CD14-positive monocyte (primary cell): ENCODE measurements at regions of chr15 and their contacts with region 1.

Region 1: GRCh38 chr15:69413822-69414700 is at the start of gene KIF23:
- DNase-seq: peak; percentile 90 to 99 (median 94)
- H3K4me3 ChIP-seq: peak within 1 kb of the TSS; percentile 76 to 97 (median 90)
- H3K4me3 Mint-ChIP-seq: peak within 1 kb of the TSS; percentile 92 to 96
- H3K27ac ChIP-seq: no peak within 1 kb of the TSS
- H3K27ac Mint-ChIP-seq: peak within 1 kb of the TSS in 6 of 7 donors; percentile 16 to 82 (median 73)
- H3K4me1 ChIP-seq: peaks cover 6 to 14% of the 10 kb centered on the region in 2 donors
- H3K4me1 Mint-ChIP-seq: peaks cover 12% of the 10 kb centered on the region
- H3K27me3 ChIP-seq: no peaks in the 10 kb centered on the region
- H3K27me3 Mint-ChIP-seq: peaks cover 0 to 5% (median 2%) of the 10 kb centered on the region in 3 donors
- CTCF ChIP-seq: no peak
- polyA plus RNA-seq, gene KIF23: 1.5 to 8.1 (median 1.8) TPM

Region 2: DNA sequence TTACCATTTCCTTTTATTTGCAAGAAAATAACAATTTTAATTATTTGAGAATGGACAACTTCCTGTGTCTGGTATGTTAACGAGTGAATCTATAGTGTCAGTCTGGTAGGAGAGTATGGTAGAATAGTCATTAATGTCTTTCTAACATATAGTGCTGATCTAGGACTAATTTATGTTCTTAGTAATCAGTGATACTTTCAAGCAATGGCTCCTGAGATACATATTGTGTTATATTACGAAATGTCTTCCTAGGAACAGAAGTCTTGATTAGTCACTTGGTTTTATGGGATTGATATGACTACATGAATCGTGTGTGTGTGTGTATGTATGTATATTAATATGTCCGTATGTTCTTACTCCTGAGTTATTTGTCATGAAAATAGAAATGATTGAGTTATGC is 181.9 kb before region 1 on chr15:
- intact Hi-C with region 1: no loop called
- DNase-seq: no peak
- H3K4me3 ChIP-seq: no peak overlapping the region
- H3K4me3 Mint-ChIP-seq: no peak overlapping the region
- H3K27ac ChIP-seq: no peak overlapping the region
- H3K27ac Mint-ChIP-seq: no peak overlapping the region
- H3K4me1 ChIP-seq: no peaks in the 10 kb centered on the region
- H3K4me1 Mint-ChIP-seq: no peaks in the 10 kb centered on the region
- H3K27me3 ChIP-seq: no peaks in the 10 kb centered on the region
- H3K27me3 Mint-ChIP-seq: peaks cover 0 to 2% (median 0%) of the 10 kb centered on the region in 3 donors
- CTCF ChIP-seq: no peak

Region 3: DNA sequence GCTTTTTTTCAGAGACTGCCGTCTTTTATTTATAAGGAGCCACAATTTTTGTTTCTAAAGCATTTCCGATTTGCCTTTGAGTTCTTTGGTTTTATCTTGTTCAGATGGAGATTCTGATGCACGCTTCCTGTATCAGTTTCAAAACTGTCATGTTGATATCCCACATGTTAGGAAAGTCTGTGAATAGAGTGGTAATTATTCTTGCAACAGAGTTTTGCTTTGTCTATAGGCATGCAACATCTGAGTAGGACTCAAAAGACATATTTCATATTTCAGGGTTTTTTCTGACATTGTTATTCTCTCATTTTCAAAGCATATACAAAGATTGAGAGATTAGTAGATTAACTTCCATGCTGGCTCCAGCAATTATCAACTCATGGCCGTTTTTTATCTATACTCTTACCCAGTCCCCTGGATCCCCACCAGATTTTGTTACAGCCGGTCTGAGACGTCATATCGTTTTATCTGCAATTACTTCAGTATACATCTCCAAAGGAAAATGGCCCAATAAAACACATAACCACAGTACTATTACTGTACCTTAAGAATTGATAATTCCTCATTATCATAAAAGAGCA is 93.0 kb before region 1 on chr15:
- intact Hi-C with region 1: no loop called
- DNase-seq: no peak
- H3K4me3 ChIP-seq: no peak overlapping the region
- H3K4me3 Mint-ChIP-seq: no peak overlapping the region
- H3K27ac ChIP-seq: no peak overlapping the region
- H3K27ac Mint-ChIP-seq: no peak overlapping the region
- H3K4me1 ChIP-seq: no peaks in the 10 kb centered on the region
- H3K4me1 Mint-ChIP-seq: peaks cover 27% of the 10 kb centered on the region
- H3K27me3 ChIP-seq: no peaks in the 10 kb centered on the region
- H3K27me3 Mint-ChIP-seq: peaks cover 3 to 8% (median 5%) of the 10 kb centered on the region in 3 donors
- CTCF ChIP-seq: no peak

Region 4: DNA sequence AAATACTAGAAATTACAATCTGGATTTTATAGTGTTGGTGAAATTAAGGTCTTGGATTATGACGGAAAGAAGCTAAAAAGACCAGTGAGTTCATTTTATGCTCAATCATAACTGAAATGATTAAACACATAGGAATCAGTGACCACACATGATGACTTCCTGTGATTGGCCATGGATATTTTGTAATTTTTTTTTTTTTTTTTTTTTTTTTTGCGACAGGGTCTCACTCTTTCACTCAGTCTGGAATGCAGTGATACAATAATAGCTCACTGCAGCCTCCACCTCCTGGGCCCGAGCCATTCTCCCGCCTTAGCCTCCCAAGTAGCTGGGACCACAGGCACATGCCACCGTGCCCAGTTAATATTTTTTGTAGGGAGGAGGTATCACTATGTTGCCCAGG is 67.9 kb before region 1 on chr15:
- intact Hi-C with region 1: no loop called
- DNase-seq: no peak
- H3K4me3 ChIP-seq: no peak overlapping the region
- H3K4me3 Mint-ChIP-seq: no peak overlapping the region
- H3K27ac ChIP-seq: no peak overlapping the region
- H3K27ac Mint-ChIP-seq: no peak overlapping the region
- H3K4me1 ChIP-seq: no peaks in the 10 kb centered on the region
- H3K4me1 Mint-ChIP-seq: no peaks in the 10 kb centered on the region
- H3K27me3 ChIP-seq: no peaks in the 10 kb centered on the region
- H3K27me3 Mint-ChIP-seq: peaks cover 0 to 2% (median 1%) of the 10 kb centered on the region in 3 donors
- CTCF ChIP-seq: no peak

Region 5: GRCh38 chr15:69380100-69380727 is 33.8 kb before region 1 on chr15:
- intact Hi-C with region 1: no loop called
- DNase-seq: no peak
- H3K4me3 ChIP-seq: no peak overlapping the region
- H3K4me3 Mint-ChIP-seq: no peak overlapping the region
- H3K27ac ChIP-seq: no peak overlapping the region
- H3K27ac Mint-ChIP-seq: no peak overlapping the region
- H3K4me1 ChIP-seq: no peaks in the 10 kb centered on the region
- H3K4me1 Mint-ChIP-seq: no peaks in the 10 kb centered on the region
- H3K27me3 ChIP-seq: no peaks in the 10 kb centered on the region
- H3K27me3 Mint-ChIP-seq: peaks cover 0 to 10% (median 4%) of the 10 kb centered on the region in 3 donors
- CTCF ChIP-seq: no peak

Region 6: GRCh38 chr15:69452692-69453521 is 38.8 kb after region 1 on chr15 and contains the start of gene RPLP1:
- intact Hi-C with region 1: loop called (anchors 2 kb)
- DNase-seq: peak; percentile 93 to 97 (median 94)
- H3K4me3 ChIP-seq: peak within 1 kb of the TSS; percentile 82 to 97 (median 89)
- H3K4me3 Mint-ChIP-seq: peak within 1 kb of the TSS; percentile 95 to 99
- H3K27ac ChIP-seq: peak within 1 kb of the TSS; percentile 82 to 91
- H3K27ac Mint-ChIP-seq: peak within 1 kb of the TSS; percentile 88 to 97 (median 96)
- H3K4me1 ChIP-seq: peaks cover 29 to 36% of the 10 kb centered on the region in 2 donors
- H3K4me1 Mint-ChIP-seq: peaks cover 38% of the 10 kb centered on the region
- H3K27me3 ChIP-seq: no peaks in the 10 kb centered on the region
- H3K27me3 Mint-ChIP-seq: no peaks in the 10 kb centered on the region
- CTCF ChIP-seq: no peak
- polyA plus RNA-seq, gene RPLP1: 1,140 to 1,235 (median 1,177) TPM